Breast epithelium (tissue), 4 donors: ENCODE measurements at regions of chr11 and their contacts with region 1.

Region 1: GRCh38 chr11:131595812-131596211 is 225.4 kb downstream of the NTM start:
- DNase-seq: no peak
- H3K4me3 ChIP-seq: no peak overlapping the region
- H3K27ac ChIP-seq: no peak overlapping the region
- H3K4me1 ChIP-seq: no peaks in the 10 kb centered on the region
- H3K27me3 ChIP-seq: peaks cover 0 to 3% of the 10 kb centered on the region in 2 donors
- CTCF ChIP-seq: no peak
- POLR2A ChIP-seq: no peak

Region 2: DNA sequence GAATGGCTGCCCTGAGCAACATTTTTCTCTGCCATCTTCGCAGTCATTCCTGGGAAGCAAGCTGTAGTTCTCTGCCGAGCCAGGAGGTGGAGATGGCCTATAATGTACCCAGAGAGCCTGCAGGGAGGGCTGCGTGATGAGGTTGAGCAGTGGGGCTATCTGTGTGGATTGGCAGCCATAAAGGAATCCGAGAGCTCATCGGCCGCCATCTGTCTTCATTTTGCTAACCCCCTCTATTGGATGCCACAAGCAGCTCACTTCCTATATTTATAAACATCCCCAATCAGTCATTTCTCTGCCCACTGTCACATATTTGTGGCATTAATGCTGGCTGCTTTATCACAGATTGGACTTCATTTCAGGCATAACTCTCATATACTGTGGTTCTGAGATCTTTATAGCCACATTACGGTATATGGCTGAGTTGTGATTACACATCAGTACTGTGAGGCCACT is 15.9 kb before region 1 on chr11:
- intact Hi-C with region 1: no loop called
- DNase-seq: no peak
- H3K4me3 ChIP-seq: no peak overlapping the region
- H3K27ac ChIP-seq: no peak overlapping the region
- H3K4me1 ChIP-seq: no peaks in the 10 kb centered on the region
- H3K27me3 ChIP-seq: peaks cover 0 to 5% of the 10 kb centered on the region in 2 donors
- CTCF ChIP-seq: no peak
- POLR2A ChIP-seq: no peak

Region 3: GRCh38 chr11:132586801-132587200 is 991.0 kb after region 1 on chr11:
- intact Hi-C with region 1: loop called (anchors 5 kb)
- DNase-seq: no peak
- H3K4me3 ChIP-seq: no peak overlapping the region
- H3K27ac ChIP-seq: no peak overlapping the region
- H3K4me1 ChIP-seq: no peaks in the 10 kb centered on the region
- H3K27me3 ChIP-seq: no peaks in the 10 kb centered on the region
- CTCF ChIP-seq: no peak
- POLR2A ChIP-seq: no peak